HepG2 (cell line): ENCODE measurements at regions of chr2 and their contacts with region 1.

Region 1: GRCh38 chr2:231925303-231926179 is 655 bp downstream of the NPPC start:
- DNase-seq: peak; percentile 73
- ATAC-seq: peak; percentile 88
- H3K4me3 ChIP-seq: peak overlapping the region; percentile 41 to 75 (median 58)
- H3K27ac ChIP-seq: no peak overlapping the region
- H3K4me1 ChIP-seq: peaks cover 44% of the 10 kb centered on the region
- H3K27me3 ChIP-seq: peaks cover 18 to 92% of the 10 kb centered on the region in 2 experiments; a peak in 4 of 5 replicates
- CTCF ChIP-seq: peak; percentile 91
- EP300 ChIP-seq: no peak
- POLR2A ChIP-seq: no peak
- RAD21 ChIP-seq: peak; percentile 92

Region 2: GRCh38 chr2:231961349-231962166 is 36.0 kb after region 1 on chr2 and contains the start of gene DIS3L2:
- CTCF ChIA-PET with region 1: no interaction called
- POLR2A ChIA-PET with region 1: no interaction called
- in situ Hi-C with region 1: no loop called
- intact Hi-C with region 1: loop called (anchors 5 kb)
- DNase-seq: peak; percentile 81
- ATAC-seq: peak; percentile 93
- H3K4me3 ChIP-seq: peak within 1 kb of the TSS; percentile 88 to 97 (median 93)
- H3K27ac ChIP-seq: peak within 1 kb of the TSS; percentile 77
- H3K4me1 ChIP-seq: peaks cover 65% of the 10 kb centered on the region
- H3K27me3 ChIP-seq: no peaks in the 10 kb centered on the region
- CTCF ChIP-seq: peak; percentile 33
- EP300 ChIP-seq: no peak
- POLR2A ChIP-seq: peak; percentile 80 to 91
- RAD21 ChIP-seq: peak; percentile 78
- total RNA-seq, gene DIS3L2: 20.3 and 23.9 TPM in 2 replicates

Region 3: GRCh38 chr2:232142049-232142448 is 216.5 kb after region 1 on chr2:
- CTCF ChIA-PET with region 1: interaction called, 25 read pairs
- POLR2A ChIA-PET with region 1: no interaction called
- in situ Hi-C with region 1: loop called (anchors 10 kb)
- intact Hi-C with region 1: loop called (anchors 1 kb)
- DNase-seq: peak; percentile 28
- ATAC-seq: peak; percentile 86
- H3K4me3 ChIP-seq: no peak overlapping the region
- H3K27ac ChIP-seq: no peak overlapping the region
- H3K4me1 ChIP-seq: peaks cover 14% of the 10 kb centered on the region
- H3K27me3 ChIP-seq: no peaks in the 10 kb centered on the region
- CTCF ChIP-seq: peak; percentile 73
- EP300 ChIP-seq: no peak
- POLR2A ChIP-seq: no peak
- RAD21 ChIP-seq: peak; percentile 79; the same call in 1 of the 2 replicates

Region 4: GRCh38 chr2:232230557-232230956 is 305.0 kb after region 1 on chr2:
- CTCF ChIA-PET with region 1: interaction called, 3 read pairs
- POLR2A ChIA-PET with region 1: no interaction called
- in situ Hi-C with region 1: no loop called
- intact Hi-C with region 1: loop called (anchors 1 kb)
- DNase-seq: peak; percentile 39
- ATAC-seq: peak; percentile 86
- H3K4me3 ChIP-seq: no peak overlapping the region
- H3K27ac ChIP-seq: no peak overlapping the region
- H3K4me1 ChIP-seq: no peaks in the 10 kb centered on the region
- H3K27me3 ChIP-seq: no peaks in the 10 kb centered on the region
- CTCF ChIP-seq: peak; percentile 62
- EP300 ChIP-seq: no peak
- POLR2A ChIP-seq: no peak
- RAD21 ChIP-seq: peak; percentile 41; the same call in 1 of the 2 replicates